Astrocyte of the cerebellum (primary cell): ENCODE measurements at regions of chr12 and their contacts with region 1.

Region 1: DNA sequence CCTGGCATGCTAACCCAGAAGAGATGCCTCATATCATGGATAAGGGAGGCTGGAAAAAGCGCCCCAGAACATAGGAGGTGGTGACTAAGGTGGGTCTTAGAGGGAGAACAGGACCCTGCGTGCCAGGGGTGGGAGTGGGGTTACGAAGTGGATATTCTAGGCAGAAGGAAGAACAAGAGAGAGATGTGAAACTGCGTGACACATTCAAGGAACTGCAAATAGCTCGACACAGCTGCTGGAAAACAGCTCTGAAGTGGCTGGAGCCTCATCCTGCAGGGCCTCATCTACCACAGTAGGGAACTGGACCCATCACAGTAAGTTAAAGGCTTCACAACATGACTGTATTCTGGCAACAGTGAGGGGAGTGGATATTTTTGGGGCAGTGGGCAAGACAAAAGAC is 61.1 kb downstream of the RNF34 start:
- DNase-seq: no peak
- H3K4me3 ChIP-seq: no peak overlapping the region
- CTCF ChIP-seq: no peak

Region 2: GRCh38 chr12:121423682-121424623 is 37.1 kb before region 1 on chr12:
- in situ Hi-C with region 1: loop called (anchors 5 kb)
- DNase-seq: no peak
- H3K4me3 ChIP-seq: no peak overlapping the region
- CTCF ChIP-seq: no peak

Region 3: GRCh38 chr12:121522971-121523370 is 61.9 kb after region 1 on chr12:
- in situ Hi-C with region 1: no loop called
- DNase-seq: no peak
- H3K4me3 ChIP-seq: no peak overlapping the region
- CTCF ChIP-seq: no peak

Region 4: DNA sequence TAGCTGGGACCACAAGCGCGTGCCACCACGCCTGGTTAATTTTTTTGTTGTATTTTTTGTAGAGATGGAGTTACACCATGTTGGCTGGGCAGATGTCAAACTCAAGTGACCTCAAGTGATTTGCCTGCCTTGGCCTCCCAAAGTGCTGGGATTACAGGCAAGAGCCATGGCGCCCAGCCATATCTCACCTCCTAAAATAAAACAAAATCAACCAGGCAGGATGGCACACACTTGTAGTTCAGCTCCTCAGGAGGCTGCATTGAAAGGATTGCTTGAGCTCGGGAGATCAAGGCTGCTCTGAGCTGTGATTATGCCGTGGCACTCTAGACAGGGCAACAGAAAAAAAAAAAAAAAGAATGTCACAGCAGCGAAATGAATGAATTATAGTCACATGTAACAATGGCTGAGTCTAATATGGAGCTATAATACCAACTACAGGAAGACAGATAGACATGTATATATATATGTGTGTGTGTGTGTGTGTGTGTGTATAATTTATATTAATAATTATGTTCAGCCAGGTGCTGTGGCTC is 232.2 kb after region 1 on chr12:
- in situ Hi-C with region 1: no loop called
- DNase-seq: no peak
- H3K4me3 ChIP-seq: no peak overlapping the region
- CTCF ChIP-seq: no peak